ENCODE measurements at regions of chr1 and their contacts with region 1.

Region 1: DNA sequence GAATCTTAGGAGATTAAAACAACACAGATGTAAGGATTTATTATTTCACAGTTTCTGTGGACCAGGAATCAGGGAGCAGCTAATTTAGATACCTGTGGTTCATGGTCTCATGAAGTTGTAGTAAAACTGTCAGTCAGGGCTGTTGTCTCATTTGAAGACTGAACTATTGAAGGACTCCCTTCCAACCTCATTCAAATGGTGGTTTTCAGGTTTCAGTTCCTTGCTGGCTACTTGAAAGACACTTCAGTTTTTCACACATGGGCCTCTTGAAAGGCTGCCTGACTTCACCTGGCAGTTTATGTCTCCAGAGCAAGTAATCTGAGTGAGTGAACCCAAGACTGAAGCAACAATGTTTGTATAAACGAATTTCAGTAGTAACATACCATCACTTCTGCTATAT is 915.9 kb downstream of the PLA2G4A start:
- DNase-seq: no peak
- ATAC-seq: no peak
- H3K4me3 Mint-ChIP-seq: no peak overlapping the region
- H3K27ac Mint-ChIP-seq: no peak overlapping the region
- H3K4me1 Mint-ChIP-seq: no peaks in the 10 kb centered on the region
- H3K27me3 Mint-ChIP-seq: no peaks in the 10 kb centered on the region
- CTCF ChIP-seq: no peak

Region 2: GRCh38 chr1:187755536-187755935 is 10.9 kb after region 1 on chr1:
- CTCF ChIA-PET with region 1: no interaction called
- POLR2A ChIA-PET with region 1: no interaction called
- intact Hi-C with region 1: loop called (anchors 1 kb)
- DNase-seq: no peak
- ATAC-seq: no peak
- H3K4me3 Mint-ChIP-seq: no peak overlapping the region
- H3K27ac Mint-ChIP-seq: no peak overlapping the region
- H3K4me1 Mint-ChIP-seq: no peaks in the 10 kb centered on the region
- H3K27me3 Mint-ChIP-seq: no peaks in the 10 kb centered on the region
- CTCF ChIP-seq: no peak

Measured in activated B cell treated with CpG ODN at 0.5 μM for 24 hours (primary cell).